Activated CD4-positive, alpha-beta memory T cell treated with anti-CD3 and anti-CD28 coated beads for 36 hours (primary cell): ENCODE measurements at regions of chr12 and their contacts with region 1.

Region 1: GRCh38 chr12:50620109-50620977 is 115.6 kb downstream of the DIP2B start:
- DNase-seq: peak; percentile 51
- H3K4me3 Mint-ChIP-seq: no peak overlapping the region
- H3K27ac Mint-ChIP-seq: peak overlapping the region; percentile 38
- H3K4me1 Mint-ChIP-seq: peaks cover 56% of the 10 kb centered on the region
- H3K27me3 Mint-ChIP-seq: no peaks in the 10 kb centered on the region

Region 2: GRCh38 chr12:50517456-50518048 is 102.8 kb before region 1 on chr12:
- CTCF ChIA-PET with region 1: interaction called, 4 read pairs
- POLR2A ChIA-PET with region 1: no interaction called
- intact Hi-C with region 1: loop called (anchors 1 kb)
- DNase-seq: no peak
- H3K4me3 Mint-ChIP-seq: no peak overlapping the region
- H3K27ac Mint-ChIP-seq: no peak overlapping the region
- H3K4me1 Mint-ChIP-seq: peaks cover 53% of the 10 kb centered on the region
- H3K27me3 Mint-ChIP-seq: no peaks in the 10 kb centered on the region

Region 3: DNA sequence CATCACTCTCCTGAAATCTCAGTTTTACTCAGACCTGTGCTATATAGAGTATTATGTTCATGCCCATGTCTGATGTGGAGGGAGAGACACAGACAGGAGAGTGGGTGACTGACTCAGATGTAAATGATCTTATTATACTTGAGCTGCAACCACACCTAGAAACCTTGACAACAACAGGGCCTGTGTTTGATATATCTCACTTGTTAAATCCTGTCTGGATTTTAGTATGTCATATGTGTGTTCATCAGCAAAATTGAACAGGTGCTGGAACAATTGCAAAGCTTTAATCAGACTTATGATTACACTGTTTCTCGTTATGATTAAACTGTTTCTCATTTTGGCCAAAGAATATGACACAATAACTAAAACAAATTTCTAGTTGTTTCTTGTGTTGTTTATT is 77.9 kb before region 1 on chr12:
- CTCF ChIA-PET with region 1: interaction called, 3 read pairs
- POLR2A ChIA-PET with region 1: interaction called, 5 read pairs
- intact Hi-C with region 1: loop called (anchors 1 kb)
- DNase-seq: peak; percentile 41
- H3K4me3 Mint-ChIP-seq: no peak overlapping the region
- H3K27ac Mint-ChIP-seq: peak overlapping the region; percentile 87
- H3K4me1 Mint-ChIP-seq: peaks cover 48% of the 10 kb centered on the region
- H3K27me3 Mint-ChIP-seq: no peaks in the 10 kb centered on the region

Region 4: GRCh38 chr12:50589650-50590435 is 30.5 kb before region 1 on chr12:
- CTCF ChIA-PET with region 1: no interaction called
- POLR2A ChIA-PET with region 1: no interaction called
- intact Hi-C with region 1: loop called (anchors 5 kb)
- DNase-seq: peak; percentile 62
- H3K4me3 Mint-ChIP-seq: no peak overlapping the region
- H3K27ac Mint-ChIP-seq: peak overlapping the region; percentile 34
- H3K4me1 Mint-ChIP-seq: peaks cover 31% of the 10 kb centered on the region
- H3K27me3 Mint-ChIP-seq: no peaks in the 10 kb centered on the region

Region 5: GRCh38 chr12:50637870-50638481 is 17.6 kb after region 1 on chr12:
- CTCF ChIA-PET with region 1: interaction called, 13 read pairs
- POLR2A ChIA-PET with region 1: interaction called, 3 read pairs
- intact Hi-C with region 1: no loop called
- DNase-seq: no peak
- H3K4me3 Mint-ChIP-seq: no peak overlapping the region
- H3K27ac Mint-ChIP-seq: peak overlapping the region; percentile 71
- H3K4me1 Mint-ChIP-seq: peaks cover 41% of the 10 kb centered on the region
- H3K27me3 Mint-ChIP-seq: no peaks in the 10 kb centered on the region